SK-N-SH (cell line): ENCODE measurements at regions of chr10 and their contacts with region 1.

Region 1: DNA sequence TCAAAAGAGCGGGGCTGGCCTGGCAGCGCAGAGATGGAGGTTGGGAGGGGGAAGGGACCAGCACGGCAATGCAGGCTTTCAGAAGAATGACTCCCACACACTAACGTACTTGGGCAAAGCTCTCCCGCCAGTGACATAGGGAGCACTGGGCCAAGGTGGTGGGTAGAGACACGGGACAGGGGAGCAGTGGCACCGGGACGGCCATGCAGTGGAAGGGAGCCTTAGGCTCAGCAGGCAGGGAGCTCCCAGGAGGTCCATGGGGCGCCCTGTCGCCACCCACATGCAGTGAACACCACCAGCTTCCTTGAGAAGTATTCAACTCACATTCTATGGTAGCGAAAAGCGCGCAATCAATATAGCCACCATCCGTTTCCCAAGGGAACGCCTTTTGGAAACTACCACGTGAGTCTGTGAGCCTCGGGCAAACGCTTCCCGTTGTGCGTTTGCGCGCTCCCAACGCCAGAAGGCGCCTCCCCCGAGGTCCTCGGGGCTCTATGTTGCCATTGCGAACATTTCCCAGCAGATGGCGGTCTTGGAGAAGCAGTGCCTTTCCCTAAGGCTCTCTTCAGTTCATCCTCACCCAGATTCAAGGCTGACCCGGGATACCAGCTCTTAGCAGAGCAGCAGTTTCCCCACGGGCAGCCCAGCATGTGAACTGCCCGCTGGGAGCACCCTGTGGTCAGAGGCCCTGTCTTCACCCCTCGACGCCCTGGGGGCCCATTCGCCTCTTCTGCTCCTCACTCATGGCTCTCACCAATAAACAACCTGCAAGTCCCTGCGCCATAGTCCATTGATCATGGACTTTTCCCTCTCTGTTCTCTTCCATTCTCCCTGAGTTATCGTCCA is 16.4 kb upstream of the OPALIN start:
- DNase-seq: peak; percentile 94
- H3K4me3 ChIP-seq: peak overlapping the region; percentile 44 to 56
- H3K27ac ChIP-seq: no peak overlapping the region
- H3K4me1 ChIP-seq: peaks cover 0 to 9% of the 10 kb centered on the region in 2 experiments; a peak in 1 of 4 replicates
- H3K27me3 ChIP-seq: no peaks in the 10 kb centered on the region
- CTCF ChIP-seq: peak; percentile 90
- EP300 ChIP-seq: no peak
- RAD21 ChIP-seq: peak; percentile 95

Region 2: GRCh38 chr10:95242581-95243317 is 1132.5 kb before region 1 on chr10:
- CTCF ChIA-PET with region 1: no interaction called
- POLR2A ChIA-PET with region 1: no interaction called
- DNase-seq: peak; percentile 62
- H3K4me3 ChIP-seq: no peak overlapping the region
- H3K27ac ChIP-seq: no peak overlapping the region
- H3K4me1 ChIP-seq: peaks cover 2% of the 10 kb centered on the region in 2 experiments; a peak in 3 of 4 replicates
- H3K27me3 ChIP-seq: no peaks in the 10 kb centered on the region
- CTCF ChIP-seq: peak; percentile 83
- EP300 ChIP-seq: no peak
- RAD21 ChIP-seq: peak; percentile 85

Region 3: GRCh38 chr10:95552679-95553342 is 822.4 kb before region 1 on chr10:
- CTCF ChIA-PET with region 1: no interaction called
- POLR2A ChIA-PET with region 1: no interaction called
- DNase-seq: no peak
- H3K4me3 ChIP-seq: no peak overlapping the region
- H3K27ac ChIP-seq: no peak overlapping the region
- H3K4me1 ChIP-seq: no peaks in the 10 kb centered on the region
- H3K27me3 ChIP-seq: no peaks in the 10 kb centered on the region; the same call in 1 of the 2 replicates
- CTCF ChIP-seq: no peak
- EP300 ChIP-seq: no peak
- RAD21 ChIP-seq: no peak

Region 4: DNA sequence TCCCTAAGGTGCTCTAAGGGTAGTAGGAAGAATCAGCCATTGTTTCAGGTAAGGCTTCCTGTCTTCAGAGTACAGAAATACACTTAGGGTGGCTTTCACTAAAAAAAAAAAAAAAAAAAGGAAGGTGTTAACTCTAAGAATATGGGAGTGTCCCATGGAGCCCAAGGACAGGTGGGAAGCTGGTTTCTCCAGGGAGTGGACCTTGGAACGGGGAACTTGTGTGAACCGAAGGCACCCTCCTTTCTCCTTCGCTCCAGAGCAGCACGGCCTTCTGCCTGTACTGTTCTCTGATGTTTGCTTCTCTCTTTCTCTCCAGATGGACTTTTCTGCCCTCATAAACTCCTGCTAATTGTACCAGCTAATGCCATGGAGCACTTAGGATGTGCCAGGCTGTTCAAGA is 22.6 kb before region 1 on chr10:
- CTCF ChIA-PET with region 1: interaction called, 32 read pairs
- POLR2A ChIA-PET with region 1: no interaction called
- DNase-seq: no peak
- H3K4me3 ChIP-seq: no peak overlapping the region
- H3K27ac ChIP-seq: no peak overlapping the region
- H3K4me1 ChIP-seq: no peaks in the 10 kb centered on the region
- H3K27me3 ChIP-seq: peaks cover 4% of the 10 kb centered on the region; the same call in 1 of the 2 replicates
- CTCF ChIP-seq: no peak
- EP300 ChIP-seq: no peak
- RAD21 ChIP-seq: no peak

Region 5: GRCh38 chr10:96390460-96390864 is 15.3 kb after region 1 on chr10:
- CTCF ChIA-PET with region 1: interaction called, 38 read pairs
- POLR2A ChIA-PET with region 1: no interaction called
- DNase-seq: no peak
- H3K4me3 ChIP-seq: no peak overlapping the region
- H3K27ac ChIP-seq: no peak overlapping the region
- H3K4me1 ChIP-seq: peaks cover 5 to 9% of the 10 kb centered on the region in 2 experiments; a peak in 3 of 4 replicates
- H3K27me3 ChIP-seq: 0 out of 2 replicates have a peak, but pooled peaks cover 12% of the 10 kb centered on the region
- CTCF ChIP-seq: no peak
- EP300 ChIP-seq: no peak
- RAD21 ChIP-seq: no peak

Region 6: GRCh38 chr10:96491299-96491698 is 116.1 kb after region 1 on chr10:
- CTCF ChIA-PET with region 1: interaction called, 12 read pairs
- POLR2A ChIA-PET with region 1: no interaction called
- DNase-seq: peak; percentile 43
- H3K4me3 ChIP-seq: no peak overlapping the region
- H3K27ac ChIP-seq: no peak overlapping the region
- H3K4me1 ChIP-seq: no peaks in the 10 kb centered on the region
- H3K27me3 ChIP-seq: no peaks in the 10 kb centered on the region
- CTCF ChIP-seq: peak; percentile 46
- EP300 ChIP-seq: no peak
- RAD21 ChIP-seq: peak; percentile 61

Region 7: DNA sequence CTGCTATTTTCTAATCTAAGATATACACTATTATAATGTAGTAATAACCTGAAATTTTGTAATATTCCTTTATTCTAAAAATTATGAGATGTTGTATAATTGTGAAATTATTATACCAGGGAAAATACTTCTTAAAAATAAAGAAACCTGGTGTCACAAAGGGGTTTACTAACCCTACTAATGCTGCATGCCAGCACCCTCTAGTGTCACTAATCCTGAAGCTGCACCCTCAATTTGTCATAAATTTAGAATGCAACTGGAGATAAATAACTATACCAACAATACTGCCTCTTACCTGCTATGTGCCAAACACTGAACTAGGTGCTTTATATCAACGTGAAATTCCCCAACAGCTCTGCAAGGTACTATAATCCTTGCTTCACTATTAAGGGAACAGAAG is 180.8 kb after region 1 on chr10:
- CTCF ChIA-PET with region 1: interaction called, 12 read pairs
- POLR2A ChIA-PET with region 1: no interaction called
- DNase-seq: peak; percentile 22
- H3K4me3 ChIP-seq: no peak overlapping the region
- H3K27ac ChIP-seq: no peak overlapping the region
- H3K4me1 ChIP-seq: no peaks in the 10 kb centered on the region
- H3K27me3 ChIP-seq: no peaks in the 10 kb centered on the region
- CTCF ChIP-seq: peak; percentile 58
- EP300 ChIP-seq: no peak
- RAD21 ChIP-seq: peak; percentile 67

Region 8: GRCh38 chr10:97016728-97017473 is 641.7 kb after region 1 on chr10:
- CTCF ChIA-PET with region 1: no interaction called
- POLR2A ChIA-PET with region 1: no interaction called
- DNase-seq: no peak
- H3K4me3 ChIP-seq: no peak overlapping the region
- H3K27ac ChIP-seq: no peak overlapping the region
- H3K4me1 ChIP-seq: no peaks in the 10 kb centered on the region
- H3K27me3 ChIP-seq: no peaks in the 10 kb centered on the region
- CTCF ChIP-seq: no peak
- EP300 ChIP-seq: no peak
- RAD21 ChIP-seq: no peak